ENCODE measurements at regions of chr3 and their contacts with region 1.

Region 1: GRCh38 chr3:43621656-43622432 is at the start of gene ANO10:
- DNase-seq: peak; percentile 96 to 99 (median 97)
- H3K4me3 ChIP-seq: peak within 1 kb of the TSS; percentile 73 to 96 (median 90)
- H3K27ac ChIP-seq: peak within 1 kb of the TSS in 58 of 59 donors; percentile 41 to 95 (median 82)
- H3K27me3 ChIP-seq: no peaks in the 10 kb centered on the region
- CTCF ChIP-seq: peak in 15 of 56 donors; percentile 0 to 57 (median 27)
- total RNA-seq, gene ANO10: 24.1 to 52.4 (median 34.0) TPM

Region 2: DNA sequence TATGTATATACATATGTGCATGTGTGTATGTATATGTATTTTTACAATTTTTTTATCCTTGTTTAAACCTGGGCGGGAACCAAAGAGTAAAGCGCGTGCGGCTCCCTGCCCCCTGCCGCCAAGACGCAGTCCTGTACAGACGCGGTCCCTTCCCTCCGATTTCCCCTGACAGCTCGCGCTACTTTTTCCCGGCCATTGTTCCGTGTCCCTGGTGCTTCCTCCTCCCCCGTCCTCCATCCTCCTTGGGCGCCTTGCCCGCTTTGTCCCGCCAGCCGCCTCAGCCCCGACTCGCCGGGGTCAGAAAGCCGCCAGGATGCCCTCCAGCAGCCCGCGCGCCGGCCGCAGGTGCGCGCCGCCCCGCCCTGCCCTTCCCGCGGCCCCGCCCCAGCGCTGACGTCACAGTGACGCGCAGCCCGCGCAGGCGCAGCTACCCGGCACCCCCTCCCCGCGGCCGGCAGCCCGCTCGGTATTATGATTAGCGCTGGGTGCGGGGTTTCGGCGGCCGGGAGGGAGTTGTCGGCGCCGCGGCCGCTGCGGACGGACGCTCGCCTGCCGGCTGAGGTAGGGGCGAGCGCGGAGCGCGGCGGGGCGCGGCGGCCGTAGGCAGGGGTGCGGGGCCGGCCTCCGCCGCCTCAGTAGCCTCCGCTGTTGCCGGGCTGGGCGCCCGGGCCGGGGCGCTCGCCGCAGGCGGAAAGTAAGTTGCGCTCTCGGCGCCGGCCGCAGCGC is 335.6 kb before region 1 on chr3 and contains the start of gene SNRK:
- intact Hi-C with region 1: loop called in 1 of 2 experiments (anchors 5 kb)
- DNase-seq: peak; percentile 83 to 98 (median 88)
- H3K4me3 ChIP-seq: peak within 1 kb of the TSS; percentile 55 to 86 (median 75)
- H3K27ac ChIP-seq: peak within 1 kb of the TSS in 57 of 59 donors; percentile 33 to 93 (median 81)
- H3K27me3 ChIP-seq: no peaks in the 10 kb centered on the region
- CTCF ChIP-seq: peak in 45 of 56 donors; percentile 7 to 51 (median 29)
- total RNA-seq, gene SNRK: 21.1 to 62.5 (median 44.5) TPM

Region 3: DNA sequence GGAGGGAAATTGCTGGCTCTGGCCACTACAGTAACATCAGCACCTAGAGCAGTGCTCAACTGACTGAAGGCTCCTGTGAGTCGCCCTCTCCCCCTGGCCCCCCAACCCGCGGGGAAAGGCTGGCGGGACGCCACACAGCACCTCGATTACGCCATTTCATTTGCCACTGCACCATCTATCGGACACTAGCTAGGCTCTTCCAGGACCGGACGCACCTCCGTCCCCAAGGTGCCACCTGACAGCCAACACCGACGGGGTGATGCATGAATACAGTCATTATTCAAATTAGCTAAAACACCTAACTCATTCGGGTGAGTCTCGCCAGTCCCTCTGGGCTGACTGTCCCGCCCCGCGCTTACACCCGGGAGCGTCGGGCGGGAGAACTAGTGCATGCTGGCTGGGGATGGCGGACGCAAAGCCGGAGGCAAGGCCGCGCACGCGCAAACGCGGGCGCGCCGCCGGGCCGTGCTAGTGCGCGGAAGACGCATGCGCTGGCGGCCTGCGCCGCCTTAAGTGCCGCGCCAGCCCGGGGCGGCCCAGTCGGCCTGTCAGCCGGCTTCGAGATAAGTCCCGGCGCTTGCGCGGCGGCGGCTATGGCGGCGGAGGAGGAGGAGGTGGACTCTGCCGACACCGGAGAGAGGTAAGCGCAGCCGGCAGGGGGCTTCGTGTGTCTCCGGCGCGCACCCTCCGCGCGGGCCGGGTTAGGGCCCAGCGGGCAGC is 68.7 kb after region 1 on chr3 and contains the start of gene ABHD5:
- intact Hi-C with region 1: loop called (anchors 2 kb)
- DNase-seq: peak; percentile 71 to 91 (median 84)
- H3K4me3 ChIP-seq: peak within 1 kb of the TSS; percentile 54 to 99 (median 89)
- H3K27ac ChIP-seq: peak within 1 kb of the TSS; percentile 39 to 97 (median 89)
- H3K27me3 ChIP-seq: no peaks in the 10 kb centered on the region
- CTCF ChIP-seq: peak in 42 of 56 donors; percentile 3 to 55 (median 36)
- total RNA-seq, gene ABHD5: 11.8 to 30.9 (median 18.3) TPM

Measured in dorsolateral prefrontal cortex (tissue), 120 donors.